ENCODE measurements at regions of chr18 and their contacts with region 1.

Region 1: GRCh38 chr18:32383050-32383819 is 87.4 kb downstream of the GAREM1 start:
- DNase-seq: peak; percentile 97
- H3K4me3 Mint-ChIP-seq: peak overlapping the region; percentile 40
- H3K27ac Mint-ChIP-seq: peak overlapping the region; percentile 98
- H3K4me1 Mint-ChIP-seq: peaks cover 69% of the 10 kb centered on the region
- H3K27me3 Mint-ChIP-seq: no peaks in the 10 kb centered on the region
- CTCF ChIP-seq: no peak

Region 2: GRCh38 chr18:32010124-32010738 is 373.0 kb before region 1 on chr18:
- CTCF ChIA-PET with region 1: no interaction called
- POLR2A ChIA-PET with region 1: no interaction called
- intact Hi-C with region 1: no loop called
- DNase-seq: no peak
- H3K4me3 Mint-ChIP-seq: no peak overlapping the region
- H3K27ac Mint-ChIP-seq: no peak overlapping the region
- H3K4me1 Mint-ChIP-seq: peaks cover 7% of the 10 kb centered on the region
- H3K27me3 Mint-ChIP-seq: no peaks in the 10 kb centered on the region
- CTCF ChIP-seq: no peak

Region 3: GRCh38 chr18:32243358-32243757 is 139.9 kb before region 1 on chr18:
- CTCF ChIA-PET with region 1: no interaction called
- POLR2A ChIA-PET with region 1: no interaction called
- intact Hi-C with region 1: no loop called
- DNase-seq: no peak
- H3K4me3 Mint-ChIP-seq: no peak overlapping the region
- H3K27ac Mint-ChIP-seq: no peak overlapping the region
- H3K4me1 Mint-ChIP-seq: no peaks in the 10 kb centered on the region
- H3K27me3 Mint-ChIP-seq: no peaks in the 10 kb centered on the region
- CTCF ChIP-seq: no peak

Region 4: GRCh38 chr18:32301976-32302743 is 81.1 kb before region 1 on chr18:
- CTCF ChIA-PET with region 1: interaction called, 3 read pairs
- POLR2A ChIA-PET with region 1: interaction called, 13 read pairs
- intact Hi-C with region 1: no loop called
- DNase-seq: peak; percentile 77
- H3K4me3 Mint-ChIP-seq: no peak overlapping the region
- H3K27ac Mint-ChIP-seq: peak overlapping the region; percentile 78
- H3K4me1 Mint-ChIP-seq: peaks cover 32% of the 10 kb centered on the region
- H3K27me3 Mint-ChIP-seq: no peaks in the 10 kb centered on the region
- CTCF ChIP-seq: no peak

Region 5: GRCh38 chr18:32324181-32324580 is 59.1 kb before region 1 on chr18:
- CTCF ChIA-PET with region 1: no interaction called
- POLR2A ChIA-PET with region 1: interaction called, 3 read pairs
- intact Hi-C with region 1: loop called (anchors 2 kb)
- DNase-seq: no peak
- H3K4me3 Mint-ChIP-seq: no peak overlapping the region
- H3K27ac Mint-ChIP-seq: peak overlapping the region; percentile 10
- H3K4me1 Mint-ChIP-seq: peaks cover 42% of the 10 kb centered on the region
- H3K27me3 Mint-ChIP-seq: no peaks in the 10 kb centered on the region
- CTCF ChIP-seq: no peak

Region 6: GRCh38 chr18:32335228-32335627 is 48.0 kb before region 1 on chr18:
- CTCF ChIA-PET with region 1: no interaction called
- POLR2A ChIA-PET with region 1: no interaction called
- intact Hi-C with region 1: no loop called
- DNase-seq: no peak
- H3K4me3 Mint-ChIP-seq: no peak overlapping the region
- H3K27ac Mint-ChIP-seq: no peak overlapping the region
- H3K4me1 Mint-ChIP-seq: no peaks in the 10 kb centered on the region
- H3K27me3 Mint-ChIP-seq: no peaks in the 10 kb centered on the region
- CTCF ChIP-seq: no peak

Region 7: GRCh38 chr18:32366586-32367538 is 16.4 kb before region 1 on chr18:
- CTCF ChIA-PET with region 1: interaction called, 8 read pairs
- POLR2A ChIA-PET with region 1: interaction called, 105 read pairs
- intact Hi-C with region 1: no loop called
- DNase-seq: peak; percentile 61
- H3K4me3 Mint-ChIP-seq: no peak overlapping the region
- H3K27ac Mint-ChIP-seq: peak overlapping the region; percentile 40
- H3K4me1 Mint-ChIP-seq: peaks cover 59% of the 10 kb centered on the region
- H3K27me3 Mint-ChIP-seq: no peaks in the 10 kb centered on the region
- CTCF ChIP-seq: no peak

Region 8: DNA sequence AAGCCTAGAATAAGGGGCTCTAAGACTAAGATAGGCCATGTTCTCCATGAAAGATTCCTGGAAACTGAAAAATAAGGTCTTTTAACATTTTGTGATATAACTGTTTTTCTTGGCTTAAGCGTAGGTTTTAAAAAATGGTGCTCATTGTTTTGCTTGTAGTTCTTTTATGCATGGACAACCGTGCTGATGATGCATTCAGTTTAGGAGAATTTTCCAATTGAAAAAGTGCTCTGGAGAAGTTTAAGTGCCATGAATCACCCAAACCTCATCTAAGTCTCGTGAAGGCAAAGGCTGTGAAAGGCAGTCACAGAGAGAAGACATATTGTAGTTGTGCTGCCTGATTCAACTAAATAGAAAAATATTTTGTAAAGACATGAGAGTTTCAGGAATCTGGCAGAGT is 199.2 kb after region 1 on chr18:
- CTCF ChIA-PET with region 1: no interaction called
- POLR2A ChIA-PET with region 1: no interaction called
- intact Hi-C with region 1: no loop called
- DNase-seq: no peak
- H3K4me3 Mint-ChIP-seq: no peak overlapping the region
- H3K27ac Mint-ChIP-seq: no peak overlapping the region
- H3K4me1 Mint-ChIP-seq: no peaks in the 10 kb centered on the region
- H3K27me3 Mint-ChIP-seq: no peaks in the 10 kb centered on the region
- CTCF ChIP-seq: no peak

Measured in MCF 10A (cell line).